AG04449 (cell line): ENCODE measurements at regions of chr3 and their contacts with region 1.

Region 1: DNA sequence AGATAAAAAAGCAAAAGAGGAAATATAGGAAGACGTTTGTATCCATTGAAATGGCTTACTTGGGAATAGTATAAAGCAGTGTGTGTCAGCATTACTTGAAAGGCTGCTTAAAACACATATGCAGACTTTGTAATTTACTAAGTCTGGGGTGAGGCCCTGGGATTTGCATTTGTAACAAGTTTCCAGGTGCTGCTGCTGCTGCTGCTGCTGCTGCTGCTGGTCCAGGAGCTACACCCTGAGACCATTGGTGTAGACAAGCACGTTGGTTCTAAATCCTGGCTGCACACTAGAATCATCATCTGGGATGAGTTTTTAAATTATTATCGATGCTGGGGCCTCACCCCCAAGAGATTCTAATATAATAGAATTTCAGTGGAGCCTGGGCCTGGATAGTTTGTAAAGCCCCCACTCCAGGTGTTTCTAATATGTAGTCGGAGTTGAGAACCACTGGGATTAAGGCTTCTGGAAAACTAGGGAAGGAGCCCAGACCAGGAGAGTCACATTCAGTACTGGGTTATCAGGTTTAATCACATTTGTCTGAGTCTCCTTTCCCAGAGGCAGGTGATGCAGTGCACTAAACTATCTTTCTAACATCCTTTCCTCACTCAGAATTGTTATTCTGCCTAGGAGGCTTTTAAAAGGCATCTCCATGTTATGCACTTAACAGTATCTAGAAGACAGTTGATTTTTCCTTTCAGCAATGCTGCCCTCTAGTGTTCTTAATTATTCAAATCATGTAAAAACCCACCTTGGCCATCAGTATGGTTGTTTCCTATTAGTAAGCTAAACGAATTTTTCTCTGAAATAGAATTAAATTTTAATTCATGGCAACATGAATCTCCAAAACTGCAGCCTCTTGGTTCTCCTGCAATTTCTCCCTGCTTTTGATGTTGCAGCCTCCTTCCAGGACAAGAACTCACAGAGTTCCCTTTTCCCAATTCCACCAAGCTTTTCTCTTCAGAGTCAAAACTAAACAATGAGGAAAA is 45.4 kb downstream of the SSR3 start:
- DNase-seq: no peak
- H3K4me3 ChIP-seq: no peak overlapping the region
- CTCF ChIP-seq: peak; percentile 29

Region 2: DNA sequence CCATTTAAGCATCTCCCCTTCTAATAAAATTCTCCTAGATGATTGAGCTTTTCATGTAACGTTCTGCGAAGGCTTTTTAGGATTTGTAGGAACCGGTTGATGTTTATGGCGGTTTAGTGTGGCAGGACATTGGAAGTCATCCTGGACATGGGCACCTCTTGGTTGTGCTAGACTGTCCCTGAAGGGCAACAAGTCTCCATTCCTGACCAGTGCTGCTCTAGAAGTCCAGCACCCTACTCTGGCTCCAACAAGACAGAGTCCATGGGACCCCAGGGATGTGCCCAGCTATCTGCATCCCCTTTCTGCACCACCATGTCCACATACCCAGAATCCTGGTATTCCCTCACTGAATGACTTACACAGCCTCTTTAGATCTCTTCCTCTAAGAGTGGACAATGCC is 342.7 kb before region 1 on chr3:
- CTCF ChIA-PET with region 1: interaction called, 277 read pairs
- POLR2A ChIA-PET with region 1: no interaction called
- DNase-seq: no peak
- H3K4me3 ChIP-seq: no peak overlapping the region
- CTCF ChIP-seq: no peak

Region 3: DNA sequence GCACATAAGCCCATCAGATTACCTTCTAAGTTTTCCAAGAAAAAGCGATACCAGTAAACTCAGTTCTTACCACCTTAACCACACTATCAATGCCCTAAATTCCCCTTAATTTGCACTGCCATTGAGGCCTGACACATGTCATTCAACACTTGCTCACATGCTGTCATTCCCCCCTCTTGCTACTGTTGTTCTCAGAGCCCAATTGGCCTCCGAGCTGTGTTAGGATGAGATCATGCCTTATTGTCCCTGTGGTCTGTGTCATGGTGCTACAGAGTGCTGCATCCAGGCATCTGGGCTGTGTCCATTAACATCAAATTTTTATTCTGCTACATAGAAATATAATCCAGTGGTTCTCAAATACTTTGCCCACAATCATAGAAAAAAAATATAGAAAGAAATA is 168.2 kb before region 1 on chr3:
- CTCF ChIA-PET with region 1: no interaction called
- POLR2A ChIA-PET with region 1: no interaction called
- DNase-seq: no peak
- H3K4me3 ChIP-seq: no peak overlapping the region
- CTCF ChIP-seq: no peak

Region 4: GRCh38 chr3:156356537-156357363 is 152.7 kb before region 1 on chr3:
- CTCF ChIA-PET with region 1: no interaction called
- POLR2A ChIA-PET with region 1: no interaction called
- DNase-seq: no peak
- H3K4me3 ChIP-seq: no peak overlapping the region
- CTCF ChIP-seq: no peak

Region 5: DNA sequence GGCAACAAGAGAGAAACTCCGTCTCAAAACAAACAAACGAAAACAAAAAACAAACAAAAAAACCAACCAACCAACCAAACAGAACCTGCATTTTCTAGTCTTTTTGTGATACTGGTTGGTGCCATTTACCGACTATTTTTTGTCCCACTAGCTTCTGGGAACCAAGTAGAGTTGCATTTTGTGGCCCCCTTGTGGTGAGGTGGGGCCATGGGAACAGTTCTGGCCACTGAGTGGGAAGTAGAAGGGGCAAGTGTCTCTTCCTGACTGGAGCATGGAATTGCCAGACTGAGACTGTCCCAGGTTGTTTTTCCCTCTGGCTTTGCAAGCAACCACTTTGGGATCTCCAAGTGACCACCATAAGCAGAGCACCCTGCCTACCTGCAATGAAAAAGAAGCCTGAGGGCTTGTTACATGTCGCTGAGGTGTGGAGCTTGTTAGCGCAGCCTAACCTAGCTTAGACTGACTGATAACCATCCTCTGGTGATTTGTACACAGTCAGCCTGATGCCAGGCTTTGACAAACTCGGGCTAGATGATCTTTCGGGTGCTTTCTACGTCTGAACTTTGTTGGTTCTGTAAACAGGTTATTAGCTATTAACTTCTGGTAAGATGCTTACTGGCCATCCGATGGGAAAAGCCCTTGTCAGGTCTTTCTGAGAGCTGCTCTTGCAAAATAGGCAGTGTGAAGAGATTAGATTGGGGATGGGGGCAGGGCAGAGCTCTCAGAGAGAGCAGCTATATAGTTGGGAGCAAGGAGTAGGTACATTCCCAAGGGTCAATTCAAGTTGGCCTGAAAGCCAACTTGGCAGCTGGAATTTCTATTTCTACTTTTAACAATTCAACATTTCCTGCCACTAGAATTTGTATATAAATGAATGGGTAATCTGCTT is 126.8 kb before region 1 on chr3:
- CTCF ChIA-PET with region 1: interaction called, 18 read pairs
- POLR2A ChIA-PET with region 1: no interaction called
- DNase-seq: no peak
- H3K4me3 ChIP-seq: no peak overlapping the region
- CTCF ChIP-seq: peak; percentile 58

Region 6: DNA sequence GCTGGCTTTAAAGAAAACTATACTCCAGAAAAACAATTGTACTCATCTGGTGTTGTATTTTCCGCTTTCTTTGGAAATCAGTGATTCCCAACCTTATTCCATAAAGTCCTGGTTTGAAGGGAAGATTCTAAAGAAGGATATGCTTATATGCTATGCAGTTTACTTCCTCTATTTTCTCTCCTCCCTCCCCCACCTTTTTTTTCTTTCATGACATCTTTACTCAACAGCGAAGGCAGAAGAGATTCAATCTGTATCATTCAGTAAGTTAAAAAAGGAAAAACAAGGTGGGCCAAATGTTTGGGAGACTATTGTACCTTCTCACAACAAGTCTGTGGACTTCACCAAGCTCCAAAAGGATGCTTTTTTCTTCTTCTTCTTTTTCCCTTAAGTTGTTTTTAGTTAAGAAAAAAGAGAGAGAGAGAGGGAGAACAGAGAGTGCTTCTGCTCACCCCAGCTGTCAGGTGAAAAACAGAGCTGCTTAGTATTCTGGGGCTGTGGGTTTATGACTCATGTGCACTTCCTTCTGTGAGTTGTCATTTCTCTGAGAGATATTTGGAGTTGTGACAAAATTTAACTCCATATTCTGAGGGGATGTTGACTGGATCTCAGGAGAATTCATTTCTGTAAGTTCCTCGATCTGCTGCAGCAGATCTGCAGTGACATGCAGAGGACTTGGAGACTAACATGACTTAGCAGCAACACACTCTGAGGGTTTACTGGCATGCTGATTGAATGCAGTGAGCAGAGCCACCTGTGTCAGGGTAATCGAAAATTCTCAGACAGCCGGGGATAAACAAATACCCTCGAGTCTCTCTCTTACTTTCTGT is 25.3 kb before region 1 on chr3:
- CTCF ChIA-PET with region 1: interaction called, 59 read pairs
- POLR2A ChIA-PET with region 1: interaction called, 3 read pairs
- DNase-seq: no peak
- H3K4me3 ChIP-seq: no peak overlapping the region; the same call in 1 of the 2 replicates
- CTCF ChIP-seq: no peak

Region 7: DNA sequence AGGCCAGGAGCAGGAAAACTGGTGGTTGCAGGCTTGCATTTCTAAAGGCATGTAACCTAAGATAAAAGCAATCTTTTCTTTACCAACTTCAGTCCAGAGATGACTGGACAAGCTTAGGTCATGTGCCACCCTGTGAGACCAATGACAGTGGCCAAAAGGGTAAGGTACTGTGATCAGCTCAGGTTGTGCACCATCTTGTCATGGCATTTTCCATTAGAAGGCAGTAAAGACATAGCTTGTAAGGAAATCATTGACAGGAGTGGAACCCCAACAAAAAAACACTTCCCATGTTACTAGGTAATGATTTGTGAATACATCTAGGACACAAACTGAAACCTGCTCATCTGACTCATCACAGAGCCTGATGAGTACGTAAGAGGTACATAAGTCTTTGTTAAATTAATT is 10.3 kb after region 1 on chr3:
- CTCF ChIA-PET with region 1: interaction called, 58 read pairs
- POLR2A ChIA-PET with region 1: no interaction called
- DNase-seq: no peak
- H3K4me3 ChIP-seq: no peak overlapping the region
- CTCF ChIP-seq: no peak

Region 8: DNA sequence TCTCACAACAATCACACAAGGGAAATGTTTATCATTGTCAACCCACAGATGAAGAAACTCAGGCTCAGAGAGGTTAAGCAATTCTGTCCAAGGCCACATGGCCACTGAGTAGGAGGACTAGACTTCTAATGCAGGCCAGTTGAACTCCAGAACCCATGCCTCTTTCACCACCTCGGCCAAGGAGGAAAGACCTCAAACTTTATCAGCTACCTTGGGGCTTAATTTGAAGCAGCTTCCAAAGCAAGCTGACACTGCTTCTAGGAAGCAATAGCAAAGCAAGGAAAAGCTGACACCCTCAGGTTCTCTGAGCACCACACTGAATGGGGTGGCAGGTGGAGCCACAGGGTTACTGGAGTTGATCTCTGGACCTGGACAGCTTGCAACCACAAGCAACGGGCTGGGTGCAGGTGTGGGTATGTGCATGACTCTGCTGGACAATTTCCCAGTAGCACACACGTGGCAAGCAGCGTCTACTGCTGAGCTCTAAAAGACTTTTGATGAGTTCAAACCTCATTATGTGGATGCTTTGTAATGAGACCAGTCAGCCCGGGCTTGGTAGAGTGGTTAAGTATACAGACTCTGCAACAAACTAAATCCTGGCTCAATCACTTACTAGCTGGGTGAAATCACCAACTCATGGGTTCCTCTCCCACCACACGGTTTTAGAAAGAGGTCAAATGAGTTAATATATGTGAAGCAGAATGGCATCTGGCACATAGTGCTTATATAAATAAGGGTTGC is 627.3 kb after region 1 on chr3:
- CTCF ChIA-PET with region 1: interaction called, 12 read pairs
- POLR2A ChIA-PET with region 1: no interaction called
- DNase-seq: no peak
- H3K4me3 ChIP-seq: no peak overlapping the region
- CTCF ChIP-seq: no peak